H1 (cell line): ENCODE measurements at regions of chr1 and their contacts with region 1.

Region 1: DNA sequence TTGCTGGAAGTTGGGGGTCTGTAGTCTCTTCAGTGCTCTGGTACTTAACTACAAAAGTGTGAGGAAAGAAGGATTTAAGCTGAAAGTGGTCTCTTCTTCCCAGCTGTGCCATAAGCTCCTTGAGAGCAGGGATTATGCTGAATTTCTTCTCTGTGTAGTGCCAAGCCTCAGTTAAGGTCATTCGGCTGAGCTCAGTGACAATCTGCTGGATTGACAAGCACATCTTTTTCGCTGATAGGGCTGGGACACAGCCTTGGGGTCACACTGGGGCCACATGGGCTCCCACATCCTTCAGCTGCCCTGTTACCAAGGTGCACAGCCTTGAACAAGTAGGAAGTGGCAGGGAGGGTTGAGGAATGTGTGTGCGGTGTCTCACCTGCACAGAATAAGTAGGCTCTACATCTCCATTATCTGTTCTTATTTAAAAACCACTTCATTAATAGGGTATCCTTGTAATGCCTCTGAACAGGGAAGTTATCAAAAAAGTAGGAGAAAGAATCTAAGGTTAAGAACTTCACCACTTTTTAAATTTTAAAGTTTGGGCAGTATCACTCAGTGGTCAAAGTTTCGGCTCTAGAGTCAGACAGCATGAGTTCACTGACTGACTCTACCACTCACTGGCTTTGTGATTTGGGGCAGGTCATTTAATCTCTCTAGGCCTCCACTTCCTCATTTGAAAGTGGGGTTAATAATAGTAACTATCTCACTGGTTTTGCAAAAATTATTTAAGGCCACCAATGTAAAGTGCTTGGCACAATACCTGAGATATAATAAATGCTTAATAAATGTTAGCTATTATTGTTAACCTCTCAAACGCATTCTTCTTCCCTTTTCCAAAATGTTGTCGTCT is 10.3 kb downstream of the ZBTB40 start:
- DNase-seq: no peak
- H3K4me3 ChIP-seq: no peak overlapping the region
- H3K27ac ChIP-seq: no peak overlapping the region
- H3K4me1 ChIP-seq: peaks cover 0 to 2% (median 0%) of the 10 kb centered on the region in 4 experiments; a peak in 4 of 7 replicates
- H3K27me3 ChIP-seq: no peaks in the 10 kb centered on the region
- CTCF ChIP-seq: no peak
- EP300 ChIP-seq: no peak
- POLR2A ChIP-seq: no peak
- RAD21 ChIP-seq: no peak

Region 2: DNA sequence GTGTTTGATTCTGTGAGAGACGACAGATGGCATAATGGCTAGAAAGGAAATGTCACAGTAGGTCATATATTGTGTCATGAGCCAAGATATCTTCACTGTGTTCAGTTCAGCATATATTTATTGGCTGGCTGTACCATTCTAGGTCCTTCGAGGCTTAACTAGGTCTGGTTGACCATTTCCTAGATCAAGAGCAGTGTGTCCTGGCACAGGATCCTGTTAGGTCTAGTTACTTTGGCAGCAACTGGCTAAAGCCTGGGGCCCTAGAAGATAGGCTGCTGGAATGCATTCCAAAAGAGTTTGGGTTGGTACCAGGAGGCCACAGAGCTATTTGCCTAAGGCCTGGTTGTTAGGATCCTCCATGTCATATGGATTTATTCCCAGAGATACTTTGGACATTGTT is 10.7 kb after region 1 on chr1:
- CTCF ChIA-PET with region 1: interaction called, 10 read pairs
- POLR2A ChIA-PET with region 1: no interaction called
- DNase-seq: no peak
- H3K4me3 ChIP-seq: no peak overlapping the region
- H3K27ac ChIP-seq: no peak overlapping the region
- H3K4me1 ChIP-seq: no peaks in the 10 kb centered on the region
- H3K27me3 ChIP-seq: no peaks in the 10 kb centered on the region
- CTCF ChIP-seq: no peak
- EP300 ChIP-seq: no peak
- POLR2A ChIP-seq: no peak
- RAD21 ChIP-seq: no peak

Region 3: DNA sequence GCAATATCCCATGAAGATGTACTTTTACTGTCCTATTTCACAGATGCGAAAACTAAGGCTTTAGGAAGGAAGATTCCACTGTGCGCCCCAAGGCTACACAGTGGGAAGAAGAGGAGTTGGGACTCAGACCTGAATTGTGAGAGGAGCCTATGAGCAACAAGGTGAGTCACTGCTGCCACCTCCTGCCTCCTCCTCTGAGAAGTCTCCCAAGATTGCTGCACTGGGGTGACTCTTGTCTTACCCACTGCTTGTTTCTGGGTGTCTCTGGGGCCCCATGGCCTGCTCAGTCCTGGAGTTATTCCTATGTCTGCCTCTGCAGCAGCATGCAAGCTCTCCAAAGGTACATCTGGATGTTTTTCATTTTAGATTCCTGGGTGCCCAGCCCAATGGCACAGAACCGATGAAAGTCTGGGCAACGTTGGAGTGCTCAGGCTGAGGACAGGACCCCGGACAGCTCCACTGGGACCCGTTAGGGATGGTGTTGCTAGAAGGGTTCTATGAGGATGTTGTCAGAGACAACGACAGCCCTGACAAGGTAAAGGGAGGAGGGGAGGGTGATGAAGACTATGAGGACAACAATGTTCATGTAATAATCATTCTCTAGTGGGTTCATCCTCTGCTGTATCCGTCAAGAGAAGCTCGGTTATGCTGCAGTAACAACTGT is 163.5 kb after region 1 on chr1:
- CTCF ChIA-PET with region 1: no interaction called
- POLR2A ChIA-PET with region 1: no interaction called
- DNase-seq: peak in 1 of 2 experiments; percentile 78
- H3K4me3 ChIP-seq: no peak overlapping the region
- H3K27ac ChIP-seq: no peak overlapping the region
- H3K4me1 ChIP-seq: peaks cover 6 to 31% (median 19%) of the 10 kb centered on the region in 4 experiments
- H3K27me3 ChIP-seq: no peaks in the 10 kb centered on the region
- CTCF ChIP-seq: no peak
- EP300 ChIP-seq: no peak
- POLR2A ChIP-seq: no peak
- RAD21 ChIP-seq: peak; percentile 19 to 34; a peak in 3 of 4 replicates